HepG2 (cell line): ENCODE measurements at regions of chr1 and their contacts with region 1.

Region 1: DNA sequence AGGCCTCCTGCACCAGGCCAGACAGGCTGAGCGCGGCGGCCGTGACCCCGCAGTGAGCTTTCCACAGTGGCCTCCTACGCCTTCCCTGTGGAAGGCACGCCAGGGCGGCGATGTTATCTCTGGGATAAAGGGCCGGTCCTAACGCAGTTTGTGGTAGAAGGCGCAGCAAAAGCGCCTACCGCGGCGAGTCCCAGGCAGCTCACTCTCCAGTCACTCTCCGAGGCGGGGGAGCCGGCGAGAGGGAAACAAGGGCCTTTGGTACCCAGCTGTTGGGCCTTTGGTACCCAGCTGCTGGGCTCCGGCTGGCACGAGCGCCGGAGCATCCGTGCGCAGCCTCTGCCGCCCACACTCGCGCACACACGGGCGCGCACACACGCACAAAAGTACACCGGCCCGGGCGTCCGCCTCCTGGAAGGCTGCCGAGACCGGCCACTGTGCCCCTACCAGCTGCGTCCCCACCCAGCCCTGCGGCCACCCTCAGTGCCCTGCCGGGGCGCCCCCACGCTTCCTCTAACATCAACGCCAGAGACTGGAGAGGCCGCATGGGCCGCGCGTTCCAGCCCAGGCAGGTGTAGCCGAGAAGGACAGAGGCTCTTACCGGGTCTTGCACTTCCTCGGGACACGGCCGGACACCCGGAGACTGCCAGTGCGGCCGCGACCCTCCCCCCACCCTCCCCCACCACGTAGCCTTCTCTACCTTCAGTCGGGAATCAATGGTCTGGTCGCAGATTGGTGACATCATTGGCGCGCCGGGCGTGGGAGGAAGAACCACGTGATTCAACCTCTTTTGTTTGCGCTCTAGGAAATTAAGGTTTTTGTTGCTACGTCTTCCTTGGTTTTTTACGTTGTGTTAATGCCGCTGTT is 19.5 kb upstream of the ADAR start:
- DNase-seq: peak; percentile 84
- ATAC-seq: peak; percentile 87
- H3K4me3 ChIP-seq: peak overlapping the region; percentile 80 to 99 (median 97)
- H3K27ac ChIP-seq: peak overlapping the region; percentile 94
- H3K4me1 ChIP-seq: peaks cover 26% of the 10 kb centered on the region
- H3K27me3 ChIP-seq: no peaks in the 10 kb centered on the region; a peak in 1 of 5 replicates
- CTCF ChIP-seq: peak; percentile 1; the same call in 1 of the 2 replicates
- EP300 ChIP-seq: 0 out of 4 replicates have a peak, but pooled peaks of 1 of the 2 experiments have one; percentile 25
- POLR2A ChIP-seq: peak; percentile 53 to 58
- RAD21 ChIP-seq: no peak

Region 2: DNA sequence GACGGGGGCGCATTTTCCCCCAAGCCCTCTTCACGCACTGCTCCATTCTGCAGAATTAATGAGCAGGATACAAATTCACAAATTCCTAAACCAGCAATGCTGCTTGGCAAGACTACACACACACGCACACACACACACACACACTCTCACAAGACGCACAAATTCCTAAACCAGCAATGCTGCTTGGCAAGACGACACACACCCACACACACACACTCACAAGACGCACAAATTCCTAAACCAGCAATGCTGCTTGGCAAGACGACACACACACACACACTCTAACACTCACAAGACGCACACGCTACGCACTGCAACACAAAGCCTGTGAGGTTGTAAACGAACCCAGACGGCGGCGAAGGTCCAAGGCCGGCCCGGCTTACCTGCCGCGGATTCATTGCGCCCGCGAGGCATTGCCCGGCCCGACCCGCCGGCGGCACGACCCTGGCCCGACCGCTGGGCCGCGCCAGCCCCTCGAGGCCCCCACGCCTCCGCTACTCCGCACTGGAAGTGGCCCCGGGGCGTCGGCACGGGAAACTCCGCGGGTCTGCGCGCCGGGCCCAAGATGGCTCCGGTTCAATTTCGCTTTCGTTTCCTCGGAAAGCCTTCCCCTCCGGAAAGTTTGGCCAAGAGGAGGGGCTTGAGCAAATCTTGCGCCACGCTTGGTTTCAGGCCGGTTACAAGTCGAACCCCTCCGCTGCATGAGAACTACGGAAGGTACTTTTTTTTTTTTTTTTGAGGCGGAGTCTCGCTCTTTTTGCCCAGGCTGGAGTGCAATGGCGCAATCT is 19.7 kb before region 1 on chr1 and contains the start of gene ADAR:
- CTCF ChIA-PET with region 1: no interaction called
- POLR2A ChIA-PET with region 1: interaction called, 13 read pairs
- in situ Hi-C with region 1: no loop called
- intact Hi-C with region 1: no loop called
- DNase-seq: peak; percentile 93
- ATAC-seq: peak; percentile 86
- H3K4me3 ChIP-seq: peak within 1 kb of the TSS; percentile 59 to 98 (median 87)
- H3K27ac ChIP-seq: peak within 1 kb of the TSS; percentile 98
- H3K4me1 ChIP-seq: peaks cover 52% of the 10 kb centered on the region
- H3K27me3 ChIP-seq: no peaks in the 10 kb centered on the region; a peak in 1 of 5 replicates
- CTCF ChIP-seq: peak; percentile 39
- EP300 ChIP-seq: 0 out of 4 replicates have a peak, but pooled peaks of 1 of the 2 experiments have one; percentile 9
- POLR2A ChIP-seq: peak; percentile 31 to 39; a peak in 2 of 4 replicates
- RAD21 ChIP-seq: peak; percentile 49; the same call in 1 of the 2 replicates
- total RNA-seq, gene ADAR: 70.8 and 94.6 TPM in 2 replicates

Region 3: GRCh38 chr1:154807048-154807591 is 179.6 kb after region 1 on chr1:
- CTCF ChIA-PET with region 1: no interaction called
- POLR2A ChIA-PET with region 1: no interaction called
- in situ Hi-C with region 1: no loop called
- intact Hi-C with region 1: no loop called
- DNase-seq: no peak
- ATAC-seq: no peak
- H3K4me3 ChIP-seq: no peak overlapping the region
- H3K27ac ChIP-seq: no peak overlapping the region
- H3K4me1 ChIP-seq: no peaks in the 10 kb centered on the region
- H3K27me3 ChIP-seq: peaks cover 9 to 85% of the 10 kb centered on the region in 2 experiments
- CTCF ChIP-seq: no peak
- EP300 ChIP-seq: no peak
- POLR2A ChIP-seq: no peak
- RAD21 ChIP-seq: no peak